ENCODE measurements at regions of chr12 and their contacts with region 1.

Region 1: GRCh38 chr12:54220092-54220557 is 31.3 kb upstream of the SMUG1 start:
- DNase-seq: peak; percentile 74 to 95 (median 92)
- H3K4me3 ChIP-seq: no peak overlapping the region
- H3K27ac ChIP-seq: no peak overlapping the region
- H3K4me1 ChIP-seq: peaks cover 0 to 9% (median 2%) of the 10 kb centered on the region in 3 donors
- H3K27me3 ChIP-seq: no peaks in the 10 kb centered on the region
- CTCF ChIP-seq: peak; percentile 84

Region 2: GRCh38 chr12:54379401-54380201 is 159.5 kb after region 1 on chr12:
- intact Hi-C with region 1: loop called (anchors 10 kb)
- DNase-seq: peak; percentile 95 to 96 (median 95)
- H3K4me3 ChIP-seq: peak overlapping the region; percentile 45 to 77 (median 75)
- H3K27ac ChIP-seq: peak overlapping the region; percentile 30 to 41
- H3K4me1 ChIP-seq: peaks cover 0 to 7% (median 7%) of the 10 kb centered on the region in 3 donors
- H3K27me3 ChIP-seq: no peaks in the 10 kb centered on the region
- CTCF ChIP-seq: peak; percentile 100